Spleen (tissue), 13 donors: ENCODE measurements at regions of chr3 and their contacts with region 1.

Region 1: GRCh38 chr3:122679085-122679881 is 1.4 kb upstream of the PARP14 start:
- DNase-seq: peak; percentile 90
- H3K4me3 ChIP-seq: peak overlapping the region; percentile 1 to 94 (median 78)
- H3K27ac ChIP-seq: peak overlapping the region; percentile 94 to 99 (median 96)
- H3K4me1 ChIP-seq: peaks cover 40 to 58% (median 50%) of the 10 kb centered on the region in 6 donors
- H3K27me3 ChIP-seq: no peaks in the 10 kb centered on the region
- CTCF ChIP-seq: peak; percentile 53 to 90 (median 78)
- POLR2A ChIP-seq: peak in 1 of 3 donors; percentile 25

Region 2: GRCh38 chr3:122245513-122246174 is 433.6 kb before region 1 on chr3:
- intact Hi-C with region 1: no loop called
- DNase-seq: no peak
- H3K4me3 ChIP-seq: peak overlapping the region in 4 of 8 donors; percentile 7 to 58 (median 22)
- H3K27ac ChIP-seq: peak overlapping the region in 7 of 8 donors; percentile 68 to 89 (median 77)
- H3K4me1 ChIP-seq: peaks cover 0 to 35% (median 25%) of the 10 kb centered on the region in 6 donors
- H3K27me3 ChIP-seq: no peaks in the 10 kb centered on the region
- CTCF ChIP-seq: peak in 9 of 11 experiments; percentile 11 to 51 (median 34)
- POLR2A ChIP-seq: no peak

Region 3: GRCh38 chr3:122403489-122403888 is 275.8 kb before region 1 on chr3:
- intact Hi-C with region 1: loop called (anchors 10 kb)
- DNase-seq: no peak
- H3K4me3 ChIP-seq: no peak overlapping the region
- H3K27ac ChIP-seq: no peak overlapping the region
- H3K4me1 ChIP-seq: peaks cover 0 to 4% (median 0%) of the 10 kb centered on the region in 6 donors
- H3K27me3 ChIP-seq: no peaks in the 10 kb centered on the region
- CTCF ChIP-seq: no peak
- POLR2A ChIP-seq: no peak

Region 4: GRCh38 chr3:122563717-122564025 is 115.6 kb before region 1 on chr3:
- intact Hi-C with region 1: loop called (anchors 2 kb)
- DNase-seq: no peak
- H3K4me3 ChIP-seq: peak overlapping the region; percentile 60 to 95 (median 82)
- H3K27ac ChIP-seq: peak overlapping the region; percentile 94 to 99 (median 97)
- H3K4me1 ChIP-seq: peaks cover 37 to 87% (median 81%) of the 10 kb centered on the region in 6 donors
- H3K27me3 ChIP-seq: no peaks in the 10 kb centered on the region
- CTCF ChIP-seq: no peak
- POLR2A ChIP-seq: no peak

Region 5: GRCh38 chr3:122754929-122755328 is 75.6 kb after region 1 on chr3:
- intact Hi-C with region 1: no loop called
- DNase-seq: no peak
- H3K4me3 ChIP-seq: no peak overlapping the region
- H3K27ac ChIP-seq: peak overlapping the region in 1 of 8 donors; percentile 37
- H3K4me1 ChIP-seq: peaks cover 0 to 38% (median 3%) of the 10 kb centered on the region in 6 donors
- H3K27me3 ChIP-seq: no peaks in the 10 kb centered on the region
- CTCF ChIP-seq: peak; percentile 31 to 83 (median 66)
- POLR2A ChIP-seq: no peak

Region 6: GRCh38 chr3:123053106-123053505 is 373.8 kb after region 1 on chr3:
- intact Hi-C with region 1: no loop called
- DNase-seq: no peak
- H3K4me3 ChIP-seq: no peak overlapping the region
- H3K27ac ChIP-seq: no peak overlapping the region
- H3K4me1 ChIP-seq: peaks cover 0 to 7% (median 3%) of the 10 kb centered on the region in 6 donors
- H3K27me3 ChIP-seq: no peaks in the 10 kb centered on the region
- CTCF ChIP-seq: no peak
- POLR2A ChIP-seq: no peak